ENCODE measurements at regions of chr7 and their contacts with region 1.

Region 1: DNA sequence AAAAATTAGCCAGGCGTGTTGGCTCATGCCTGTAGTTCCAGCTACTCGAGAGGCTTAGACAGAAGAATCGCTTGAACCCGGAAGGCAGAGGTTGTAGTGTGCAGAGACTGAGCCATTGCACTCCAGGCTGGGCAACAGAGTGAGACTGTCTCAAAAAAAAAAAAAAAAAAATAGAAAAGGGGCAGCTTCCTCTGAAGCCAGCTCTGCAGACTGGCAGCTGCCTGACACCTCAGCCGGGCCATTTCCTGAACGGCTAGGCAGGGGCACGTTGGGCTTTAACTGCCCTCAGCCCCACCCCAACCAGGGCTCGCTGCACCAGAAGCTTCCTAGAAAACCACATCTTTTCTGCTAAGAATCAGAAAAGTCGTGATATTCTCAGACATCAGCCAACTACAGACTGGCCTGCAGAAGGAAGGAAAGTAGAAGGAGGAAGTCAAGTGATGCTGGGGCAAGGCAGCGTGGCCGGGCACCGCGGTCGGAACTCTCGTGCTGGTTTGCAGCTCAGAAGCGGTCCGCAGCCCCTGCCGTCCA is 38.0 kb downstream of the PRKAG2 start:
- DNase-seq: no peak
- H3K4me3 ChIP-seq: no peak overlapping the region
- H3K27ac ChIP-seq: no peak overlapping the region
- H3K4me1 ChIP-seq: peaks cover 0 to 18% (median 4%) of the 10 kb centered on the region in 4 experiments; a peak in 4 of 7 replicates
- H3K27me3 ChIP-seq: no peaks in the 10 kb centered on the region
- CTCF ChIP-seq: no peak
- EP300 ChIP-seq: no peak
- POLR2A ChIP-seq: no peak
- RAD21 ChIP-seq: no peak

Region 2: GRCh38 chr7:151851145-151851751 is 12.3 kb after region 1 on chr7:
- CTCF ChIA-PET with region 1: interaction called, 14 read pairs
- POLR2A ChIA-PET with region 1: no interaction called
- DNase-seq: no peak
- H3K4me3 ChIP-seq: no peak overlapping the region
- H3K27ac ChIP-seq: no peak overlapping the region
- H3K4me1 ChIP-seq: peaks cover 0 to 3% (median 0%) of the 10 kb centered on the region in 4 experiments; a peak in 1 of 7 replicates
- H3K27me3 ChIP-seq: no peaks in the 10 kb centered on the region
- CTCF ChIP-seq: no peak
- EP300 ChIP-seq: no peak
- POLR2A ChIP-seq: no peak
- RAD21 ChIP-seq: no peak

Region 3: GRCh38 chr7:151936207-151936606 is 97.3 kb after region 1 on chr7:
- CTCF ChIA-PET with region 1: no interaction called
- POLR2A ChIA-PET with region 1: no interaction called
- DNase-seq: no peak
- H3K4me3 ChIP-seq: no peak overlapping the region
- H3K27ac ChIP-seq: no peak overlapping the region
- H3K4me1 ChIP-seq: peaks cover 0 to 3% (median 1%) of the 10 kb centered on the region in 4 experiments; a peak in 2 of 7 replicates
- H3K27me3 ChIP-seq: no peaks in the 10 kb centered on the region
- CTCF ChIP-seq: no peak
- EP300 ChIP-seq: no peak
- POLR2A ChIP-seq: no peak
- RAD21 ChIP-seq: no peak

Measured in H1 (cell line).